Brain microvascular endothelial cell (primary cell): ENCODE measurements at regions of chr18 and their contacts with region 1.

Region 1: GRCh38 chr18:11733031-11733430 is 44.0 kb downstream of the GNAL start:
- DNase-seq: peak; percentile 60
- H3K4me3 ChIP-seq: no peak overlapping the region
- H3K27ac ChIP-seq: no peak overlapping the region
- H3K27me3 ChIP-seq: peaks cover 29% of the 10 kb centered on the region
- CTCF ChIP-seq: peak; percentile 94

Region 2: GRCh38 chr18:12015416-12016062 is 282.5 kb after region 1 on chr18:
- in situ Hi-C with region 1: loop called (anchors 25 kb)
- DNase-seq: no peak
- H3K4me3 ChIP-seq: no peak overlapping the region
- H3K27ac ChIP-seq: no peak overlapping the region
- H3K27me3 ChIP-seq: no peaks in the 10 kb centered on the region
- CTCF ChIP-seq: no peak